ENCODE measurements at regions of chr10 and their contacts with region 1.

Region 1: DNA sequence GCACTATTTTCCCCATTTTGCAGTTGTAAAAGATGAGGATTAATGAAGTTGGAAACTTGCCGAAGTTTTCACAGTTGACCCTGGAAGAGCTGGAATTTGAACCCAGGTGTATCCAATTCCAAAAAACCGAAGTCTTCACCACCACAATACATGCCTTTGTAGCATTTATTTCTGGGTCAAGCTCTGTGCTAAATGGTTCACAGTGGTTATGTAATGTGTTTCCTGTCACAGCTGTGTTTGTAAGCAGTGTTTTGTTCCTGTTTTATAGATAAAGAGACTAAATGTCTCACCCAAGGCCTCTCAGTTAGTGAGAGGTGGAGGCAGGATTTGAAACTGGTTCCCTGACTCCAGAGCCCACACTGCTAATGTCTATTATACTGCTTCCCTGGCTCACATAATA is 17.6 kb downstream of the SFTPA2 start:
- DNase-seq: no peak
- H3K4me3 Mint-ChIP-seq: no peak overlapping the region
- H3K27ac Mint-ChIP-seq: no peak overlapping the region
- H3K4me1 Mint-ChIP-seq: peaks cover 29% of the 10 kb centered on the region
- H3K27me3 Mint-ChIP-seq: no peaks in the 10 kb centered on the region

Region 2: DNA sequence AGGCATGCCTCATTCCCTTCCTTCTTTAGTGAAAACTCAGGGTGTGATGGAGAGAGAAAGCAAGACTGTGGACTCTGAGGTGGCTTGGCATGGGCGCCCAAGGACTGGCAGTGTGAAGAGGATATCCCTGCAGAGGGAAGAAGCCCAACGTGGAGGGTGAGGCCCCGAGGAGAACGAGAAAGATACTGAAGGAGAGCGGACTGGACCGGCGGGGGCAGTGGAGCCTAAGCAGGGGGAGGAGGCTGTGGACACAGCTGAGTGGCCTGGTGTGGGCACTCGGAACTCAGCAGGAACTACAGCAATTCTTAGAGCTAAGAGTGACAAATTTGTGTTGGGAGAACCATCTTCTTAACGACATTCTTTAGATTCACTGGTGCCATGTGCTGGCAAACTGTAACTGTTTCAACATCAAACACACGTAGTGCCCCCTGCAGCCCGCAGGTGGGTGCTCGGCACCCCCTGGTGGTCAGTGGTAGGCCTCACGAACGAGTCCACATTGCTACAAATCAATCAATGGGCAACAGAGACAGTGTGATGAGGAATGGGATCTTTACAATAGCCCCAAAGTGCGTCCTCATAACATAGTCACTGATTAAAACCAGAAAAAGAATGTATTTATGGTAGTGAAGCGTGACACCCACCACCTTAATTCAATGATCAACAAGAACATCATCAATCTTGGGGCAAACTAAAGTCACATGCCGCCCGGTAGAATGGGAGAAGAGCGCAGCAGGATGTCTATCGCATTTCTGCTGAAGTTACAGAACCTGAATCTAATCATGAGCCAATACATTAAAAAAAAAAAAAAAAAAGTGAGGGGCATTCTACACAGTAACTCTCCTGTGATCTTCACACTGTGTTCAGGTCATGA is 66.1 kb after region 1 on chr10:
- intact Hi-C with region 1: loop called (anchors 2 kb)
- DNase-seq: peak; percentile 84
- H3K4me3 Mint-ChIP-seq: no peak overlapping the region
- H3K27ac Mint-ChIP-seq: no peak overlapping the region
- H3K4me1 Mint-ChIP-seq: no peaks in the 10 kb centered on the region
- H3K27me3 Mint-ChIP-seq: peaks cover 4% of the 10 kb centered on the region

Region 3: DNA sequence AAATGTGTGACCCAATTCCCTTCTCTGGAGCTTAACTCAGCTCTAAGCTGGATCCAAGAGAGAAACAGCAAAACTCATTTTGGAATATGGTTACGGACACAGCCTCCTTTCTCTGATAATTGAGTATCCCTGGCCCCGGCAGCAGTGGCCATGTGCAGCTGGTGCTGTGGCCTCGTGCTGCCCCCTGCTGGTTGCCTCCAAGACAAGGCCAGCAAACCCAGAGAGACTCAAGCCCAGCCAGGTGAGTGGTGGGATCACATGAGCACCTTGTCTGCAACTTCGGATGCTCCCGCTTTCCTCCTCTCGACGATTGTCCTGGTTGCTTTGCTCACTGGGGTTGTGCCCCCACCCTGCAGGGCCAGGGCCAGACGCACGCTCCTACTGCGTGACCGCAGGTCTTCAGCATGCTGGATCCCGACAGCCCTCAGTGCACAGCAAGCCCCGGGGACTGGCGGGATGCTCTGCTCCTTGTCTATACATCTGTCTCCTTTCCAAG is 386.8 kb after region 1 on chr10:
- intact Hi-C with region 1: loop called (anchors 2 kb)
- DNase-seq: peak; percentile 93
- H3K4me3 Mint-ChIP-seq: no peak overlapping the region
- H3K27ac Mint-ChIP-seq: no peak overlapping the region
- H3K4me1 Mint-ChIP-seq: peaks cover 4% of the 10 kb centered on the region
- H3K27me3 Mint-ChIP-seq: peaks cover 26% of the 10 kb centered on the region

Measured in activated CD4-positive, alpha-beta T cell treated with anti-CD3 and anti-CD28 coated beads, Interleukin-2, amount 10 ng/mL, durations not matched to agents 24 days and 14 days (primary cell).